ENCODE measurements at regions of chr7 and their contacts with region 1.

Region 1: GRCh38 chr7:66859339-66859738 is 61.7 kb upstream of the TMEM248 start:
- DNase-seq: no peak
- H3K4me3 ChIP-seq: no peak overlapping the region
- CTCF ChIP-seq: no peak
- POLR2A ChIP-seq: no peak

Region 2: DNA sequence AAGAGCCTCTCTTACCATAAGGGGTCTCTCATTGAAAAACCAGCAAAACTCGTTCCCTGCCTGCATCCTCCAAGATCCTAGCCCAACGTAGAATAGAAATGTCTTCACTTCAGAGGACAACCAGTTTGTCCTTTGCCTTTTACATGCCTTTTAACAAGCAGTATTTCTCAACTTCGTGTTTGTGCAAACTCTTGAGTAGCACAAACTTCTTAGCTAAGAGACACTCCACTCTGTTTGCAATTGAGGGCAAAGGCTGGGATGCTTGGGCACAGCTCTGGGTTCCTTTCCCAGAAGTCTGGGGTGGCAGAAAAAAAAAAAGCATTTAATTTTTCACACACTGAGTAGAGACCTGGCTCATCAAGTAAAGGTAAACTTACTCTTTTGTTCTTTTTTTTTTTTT is 250.2 kb before region 1 on chr7:
- intact Hi-C with region 1: no loop called
- DNase-seq: no peak
- H3K4me3 ChIP-seq: no peak overlapping the region
- CTCF ChIP-seq: no peak
- POLR2A ChIP-seq: no peak

Region 3: DNA sequence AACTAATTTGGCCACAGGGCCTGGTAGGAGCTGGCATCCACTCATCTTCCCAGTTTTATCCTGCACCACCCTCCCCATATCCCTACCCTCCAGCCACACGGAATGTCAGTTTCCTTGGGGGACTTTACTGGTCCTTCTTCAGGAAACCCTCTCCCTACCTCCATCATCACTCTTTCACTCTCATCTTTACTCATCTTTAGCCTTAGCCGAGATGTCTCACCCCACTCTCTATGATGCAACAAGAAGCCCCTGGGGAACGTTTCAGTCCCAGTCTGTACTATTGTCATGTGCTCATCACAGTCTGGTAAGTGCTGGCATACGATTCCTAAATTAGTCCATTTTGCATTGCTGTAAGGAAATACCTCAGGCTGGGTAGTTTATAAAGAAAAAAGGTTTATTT is 26.8 kb after region 1 on chr7:
- intact Hi-C with region 1: loop called (anchors 1 kb)
- DNase-seq: no peak
- H3K4me3 ChIP-seq: no peak overlapping the region
- CTCF ChIP-seq: no peak
- POLR2A ChIP-seq: no peak

Region 4: DNA sequence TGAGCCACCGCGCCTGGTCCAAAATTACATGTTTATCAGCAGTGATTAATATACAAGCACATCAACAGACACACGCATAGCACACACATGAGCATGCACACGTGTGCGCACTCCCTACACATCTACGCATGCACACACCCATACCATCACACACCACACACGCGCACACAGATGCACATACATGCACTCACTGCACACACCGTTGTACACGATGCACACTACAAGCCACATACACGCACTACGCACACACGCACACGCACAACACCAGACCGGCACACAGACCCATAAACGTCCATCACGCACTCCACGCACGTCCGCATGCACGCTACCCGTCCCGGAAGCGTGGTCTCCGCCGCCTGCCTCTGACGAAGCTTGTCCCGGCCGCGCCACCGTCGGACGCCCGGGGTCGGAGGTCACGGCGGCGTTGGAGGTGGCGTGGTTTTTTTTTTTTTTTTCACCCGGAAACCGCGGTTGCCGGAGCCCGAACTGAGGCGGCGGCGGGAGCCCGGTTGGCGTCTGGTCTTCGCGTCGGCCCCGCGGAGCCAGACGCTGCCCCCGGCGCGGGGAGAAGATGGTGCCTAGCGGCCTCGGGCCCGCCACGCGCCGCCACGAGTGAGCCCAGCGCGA is 61.5 kb after region 1 on chr7 and contains the start of gene TMEM248:
- intact Hi-C with region 1: no loop called
- DNase-seq: peak; percentile 83 to 97
- H3K4me3 ChIP-seq: peak within 1 kb of the TSS; percentile 98
- CTCF ChIP-seq: peak in 1 of 3 donors; percentile 81
- POLR2A ChIP-seq: no peak
- total RNA-seq, gene TMEM248: 55.6 to 83.9 (median 78.2) TPM